ENCODE measurements at regions of chr1 and their contacts with region 1.

Region 1: GRCh38 chr1:36576118-36576517 is 93.4 kb upstream of the CSF3R start:
- DNase-seq: peak; percentile 65
- ATAC-seq: peak; percentile 69
- H3K4me3 ChIP-seq: no peak overlapping the region
- H3K4me3 Mint-ChIP-seq: no peak overlapping the region
- H3K27ac ChIP-seq: no peak overlapping the region
- H3K27ac Mint-ChIP-seq: no peak overlapping the region
- H3K4me1 ChIP-seq: no peaks in the 10 kb centered on the region
- H3K4me1 Mint-ChIP-seq: no peaks in the 10 kb centered on the region
- H3K27me3 ChIP-seq: peaks cover 0 to 21% (median 2%) of the 10 kb centered on the region in 4 experiments
- H3K27me3 Mint-ChIP-seq: peaks cover 24% of the 10 kb centered on the region
- CTCF ChIP-seq: peak; percentile 79

Region 2: GRCh38 chr1:36565576-36566501 is 10.3 kb before region 1 on chr1:
- CTCF ChIA-PET with region 1: interaction called, 12 read pairs
- POLR2A ChIA-PET with region 1: no interaction called
- intact Hi-C with region 1: no loop called
- DNase-seq: no peak
- ATAC-seq: no peak
- H3K4me3 ChIP-seq: no peak overlapping the region
- H3K4me3 Mint-ChIP-seq: no peak overlapping the region
- H3K27ac ChIP-seq: no peak overlapping the region
- H3K27ac Mint-ChIP-seq: no peak overlapping the region
- H3K4me1 ChIP-seq: no peaks in the 10 kb centered on the region
- H3K4me1 Mint-ChIP-seq: no peaks in the 10 kb centered on the region
- H3K27me3 ChIP-seq: no peaks in the 10 kb centered on the region
- H3K27me3 Mint-ChIP-seq: peaks cover 4% of the 10 kb centered on the region
- CTCF ChIP-seq: no peak

Measured in B cell (primary cell).